RWPE1 (cell line): ENCODE measurements at regions of chr17 and their contacts with region 1.

Region 1: DNA sequence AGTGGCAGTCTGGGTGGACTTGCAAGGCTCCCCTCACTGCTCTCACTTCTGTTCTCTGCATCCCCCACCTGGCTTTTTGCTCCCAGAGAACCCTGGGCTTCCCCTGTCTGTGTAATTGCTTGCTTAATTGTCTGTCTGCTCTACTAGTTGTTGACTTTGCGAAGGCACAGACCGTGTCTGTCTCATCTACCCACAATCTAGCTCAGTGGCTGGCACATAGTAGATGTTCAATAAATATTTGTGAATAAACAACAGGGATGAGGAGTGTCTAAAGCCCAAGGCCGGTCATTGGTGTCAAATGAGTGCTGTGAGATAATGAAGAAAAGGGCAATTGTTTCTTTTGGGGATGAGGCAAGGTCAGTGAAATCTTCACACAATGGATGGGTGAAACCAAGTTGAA is 2.8 kb upstream of the SEZ6 start:
- DNase-seq: no peak
- H3K27ac ChIP-seq: no peak overlapping the region
- CTCF ChIP-seq: no peak

Region 2: DNA sequence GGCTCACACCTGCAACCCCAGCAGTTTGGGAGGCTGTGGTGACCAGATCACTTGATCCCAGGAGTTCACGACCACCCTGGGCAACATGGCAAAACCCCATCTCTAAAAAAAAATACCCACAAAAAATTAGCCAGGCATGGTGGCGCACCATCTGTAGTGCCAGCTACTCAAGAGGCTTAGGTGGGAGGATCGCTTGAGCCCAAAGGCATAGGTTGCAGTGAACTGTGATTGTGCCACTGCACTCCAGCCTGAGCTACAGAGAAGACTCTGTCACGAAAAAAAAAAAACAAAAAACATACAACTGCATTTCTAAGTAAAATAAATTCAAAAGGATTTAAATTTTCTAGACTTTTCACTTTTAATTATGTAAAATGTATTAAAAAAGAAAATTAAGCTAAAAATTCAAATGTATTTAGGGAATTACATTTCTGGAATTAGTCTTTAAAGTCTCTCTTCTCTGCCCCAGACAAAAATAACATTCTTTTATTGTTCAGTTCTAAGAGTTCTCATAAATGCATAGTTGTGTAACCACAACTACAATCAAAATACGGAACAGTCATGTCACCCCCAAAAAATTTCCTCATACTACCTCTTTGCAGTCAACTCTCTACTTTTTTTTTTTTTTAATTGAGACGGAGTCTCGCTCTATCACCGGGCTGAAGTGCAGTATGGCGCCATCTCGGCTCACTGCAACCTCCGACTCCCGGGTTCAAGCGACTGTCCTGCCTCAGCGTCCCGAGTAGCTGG is 180.1 kb before region 1 on chr17:
- CTCF ChIA-PET with region 1: no interaction called
- POLR2A ChIA-PET with region 1: interaction called, 11 read pairs
- DNase-seq: no peak
- H3K27ac ChIP-seq: no peak overlapping the region
- CTCF ChIP-seq: no peak

Region 3: DNA sequence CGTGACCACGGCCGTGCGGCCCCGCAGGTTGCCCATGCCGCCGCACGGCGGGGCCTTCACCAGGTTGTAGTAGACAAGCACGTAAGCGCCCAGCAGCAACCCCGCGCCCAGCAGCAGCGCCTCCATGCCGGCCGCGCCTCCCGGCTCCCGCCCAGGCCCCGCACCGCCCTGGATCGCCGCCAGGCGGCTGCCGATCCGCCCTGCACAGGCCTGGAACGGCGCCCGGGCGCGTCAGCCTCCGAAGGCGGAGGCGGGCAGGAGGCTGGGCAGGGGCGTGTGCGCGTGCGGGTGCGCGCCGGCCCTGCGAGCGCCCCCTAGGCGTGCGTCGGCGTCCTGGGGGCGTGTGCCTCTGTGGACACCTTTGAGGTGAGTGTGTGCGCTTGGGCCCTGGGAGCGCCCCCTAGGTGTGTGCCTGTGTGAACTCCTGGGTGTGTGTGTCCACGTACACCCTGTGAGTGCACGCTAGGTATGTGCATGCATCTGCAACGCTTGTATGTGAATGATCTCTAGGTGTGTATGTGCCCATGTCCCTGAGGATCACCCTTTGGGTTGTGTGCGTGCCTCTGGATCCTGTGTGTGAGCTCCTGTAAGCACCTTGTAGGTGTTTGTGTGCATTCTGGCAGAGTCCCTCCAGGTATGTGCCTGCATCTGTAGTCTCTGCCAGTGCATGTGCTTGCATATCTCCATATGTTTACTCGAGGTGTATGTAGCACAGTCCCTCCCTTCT is 105.6 kb before region 1 on chr17 and contains the start of gene DHRS13:
- CTCF ChIA-PET with region 1: no interaction called
- POLR2A ChIA-PET with region 1: no interaction called
- DNase-seq: peak; percentile 85
- H3K27ac ChIP-seq: peak within 1 kb of the TSS; percentile 90
- CTCF ChIP-seq: peak; percentile 97